Left cardiac atrium (tissue), 4 donors: ENCODE measurements at regions of chr7 and their contacts with region 1.

Region 1: GRCh38 chr7:23013715-23014649 is at the start of gene HYCC1:
- DNase-seq: peak; percentile 99
- ATAC-seq: peak; percentile 99 to 100
- total RNA-seq, gene HYCC1: 36.6 to 37.1 TPM

Region 2: DNA sequence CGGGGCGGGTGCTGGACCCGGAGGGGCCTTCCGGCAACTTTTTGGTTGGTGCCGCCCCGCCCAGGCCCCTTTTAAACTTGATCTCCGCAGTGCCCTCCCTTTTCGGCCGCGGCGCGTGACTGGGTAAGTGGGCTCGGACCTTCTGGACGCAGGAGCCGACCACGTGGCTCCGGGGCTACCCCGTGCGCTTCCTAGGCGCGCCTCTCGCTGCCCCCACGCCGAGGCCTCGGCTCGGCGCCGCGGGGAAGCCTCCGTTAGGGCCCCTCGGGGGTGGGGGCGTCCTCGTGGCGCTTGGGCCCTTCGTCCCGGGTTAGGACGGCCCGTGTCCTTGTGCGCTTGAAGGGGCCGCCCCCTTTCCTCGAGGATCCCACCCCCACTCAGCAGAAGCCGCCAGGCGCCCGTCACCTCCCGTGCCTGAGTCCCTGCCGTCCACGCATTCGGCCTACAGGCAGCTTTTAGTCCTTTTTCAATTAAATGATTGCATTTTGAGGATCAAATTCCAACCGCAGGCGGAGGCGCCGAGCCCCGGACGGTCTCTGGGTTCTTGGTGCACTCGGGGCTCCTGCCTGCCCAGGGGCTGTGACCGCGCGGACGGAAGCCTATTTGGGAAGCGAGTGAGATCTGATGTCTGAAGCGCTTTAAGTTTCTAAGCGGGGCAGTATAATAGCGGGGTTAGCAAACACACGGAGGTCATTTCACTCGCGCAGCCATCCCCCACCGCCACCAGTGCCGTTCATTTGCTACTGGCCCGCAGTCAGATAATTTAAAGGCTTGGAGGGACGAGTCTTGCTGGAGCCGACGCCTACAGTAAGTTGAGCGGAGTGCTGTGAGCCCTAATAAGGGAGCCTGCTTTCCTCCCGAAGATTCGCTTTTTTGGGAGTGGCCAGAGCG is 159.6 kb before region 1 on chr7:
- intact Hi-C with region 1: loop called in 1 of 2 experiments (anchors 10 kb)
- DNase-seq: peak; percentile 95
- ATAC-seq: peak; percentile 92 to 94

Region 3: GRCh38 chr7:22934473-22935065 is 79.4 kb before region 1 on chr7:
- intact Hi-C with region 1: no loop called
- DNase-seq: no peak
- ATAC-seq: peak in 1 of 2 donors; percentile 31

Region 4: DNA sequence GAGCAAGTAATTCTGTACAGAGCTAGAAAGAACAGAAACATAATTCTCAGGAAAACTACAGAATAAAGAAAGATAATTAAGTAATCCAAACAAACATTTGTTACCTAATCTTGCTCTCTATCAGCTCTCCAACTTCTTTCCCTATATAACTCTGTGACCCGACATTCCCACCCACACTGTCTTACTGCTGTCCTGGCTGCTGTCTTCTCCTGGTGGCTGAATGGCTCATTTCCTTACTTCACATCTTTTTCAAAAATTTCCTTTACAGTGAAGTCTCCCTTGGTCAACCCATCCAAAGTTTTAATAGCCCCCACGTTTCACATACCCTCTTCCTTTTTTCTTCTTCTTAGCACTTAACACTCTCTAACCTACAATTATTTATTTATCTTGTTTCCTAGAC is 64.0 kb before region 1 on chr7:
- intact Hi-C with region 1: loop called in 1 of 2 experiments (anchors 10 kb)
- DNase-seq: no peak
- ATAC-seq: no peak